SK-N-SH (cell line): ENCODE measurements at regions of chr2 and their contacts with region 1.

Region 1: GRCh38 chr2:28263690-28264089 is 129.0 kb upstream of the FOSL2 start:
- DNase-seq: no peak
- H3K4me3 ChIP-seq: no peak overlapping the region
- H3K27ac ChIP-seq: no peak overlapping the region
- H3K4me1 ChIP-seq: peaks cover 2 to 3% of the 10 kb centered on the region in 2 experiments; a peak in 3 of 4 replicates
- H3K27me3 ChIP-seq: no peaks in the 10 kb centered on the region
- CTCF ChIP-seq: no peak
- EP300 ChIP-seq: no peak
- RAD21 ChIP-seq: no peak

Region 2: GRCh38 chr2:28252311-28252710 is 11.4 kb before region 1 on chr2:
- CTCF ChIA-PET with region 1: interaction called, 13 read pairs
- POLR2A ChIA-PET with region 1: interaction called, 5 read pairs
- DNase-seq: no peak
- H3K4me3 ChIP-seq: no peak overlapping the region
- H3K27ac ChIP-seq: no peak overlapping the region
- H3K4me1 ChIP-seq: peaks cover 0 to 9% of the 10 kb centered on the region in 2 experiments; a peak in 2 of 4 replicates
- H3K27me3 ChIP-seq: no peaks in the 10 kb centered on the region
- CTCF ChIP-seq: no peak
- EP300 ChIP-seq: no peak
- RAD21 ChIP-seq: no peak